ENCODE measurements at regions of chr1 and their contacts with region 1.

Region 1: GRCh38 chr1:234544087-234544579 is 65.2 kb upstream of the TARBP1 start:
- DNase-seq: peak; percentile 98
- H3K4me3 ChIP-seq: no peak overlapping the region
- H3K27ac ChIP-seq: peak overlapping the region; percentile 72
- H3K4me1 ChIP-seq: peaks cover 24% of the 10 kb centered on the region
- H3K27me3 ChIP-seq: no peaks in the 10 kb centered on the region
- CTCF ChIP-seq: no peak
- POLR2A ChIP-seq: no peak

Region 2: DNA sequence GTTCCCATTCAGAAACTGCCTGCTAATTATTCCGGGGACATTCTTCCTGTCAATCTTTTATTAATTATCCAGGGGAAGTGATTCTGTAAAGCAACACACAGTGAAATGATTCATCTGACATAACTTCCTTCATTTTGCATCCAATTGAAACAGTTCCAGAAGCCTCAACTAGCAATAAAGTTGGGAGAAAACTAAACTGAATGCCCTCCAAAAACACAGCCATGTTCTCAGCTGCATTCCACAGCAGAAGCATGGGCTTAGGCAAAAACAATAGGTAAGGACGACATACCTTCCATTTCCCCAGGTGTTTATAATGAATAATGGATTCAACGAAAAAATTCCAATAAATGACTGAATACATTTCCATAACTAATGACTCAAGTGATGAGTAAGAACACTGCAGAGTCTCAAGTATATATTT is 28.3 kb before region 1 on chr1:
- CTCF ChIA-PET with region 1: interaction called, 3 read pairs
- POLR2A ChIA-PET with region 1: no interaction called
- dilution Hi-C with region 1: no loop called
- intact Hi-C with region 1: loop called (anchors 1 kb)
- DNase-seq: peak; percentile 87
- H3K4me3 ChIP-seq: no peak overlapping the region
- H3K27ac ChIP-seq: peak overlapping the region; percentile 58
- H3K4me1 ChIP-seq: peaks cover 15% of the 10 kb centered on the region
- H3K27me3 ChIP-seq: no peaks in the 10 kb centered on the region
- CTCF ChIP-seq: no peak
- POLR2A ChIP-seq: no peak

Region 3: GRCh38 chr1:234531151-234531635 is 12.9 kb before region 1 on chr1:
- CTCF ChIA-PET with region 1: interaction called, 7 read pairs
- POLR2A ChIA-PET with region 1: interaction called, 3 read pairs
- dilution Hi-C with region 1: no loop called
- intact Hi-C with region 1: loop called (anchors 2 kb)
- DNase-seq: no peak
- H3K4me3 ChIP-seq: no peak overlapping the region
- H3K27ac ChIP-seq: no peak overlapping the region
- H3K4me1 ChIP-seq: peaks cover 8% of the 10 kb centered on the region
- H3K27me3 ChIP-seq: no peaks in the 10 kb centered on the region
- CTCF ChIP-seq: no peak
- POLR2A ChIP-seq: no peak

Measured in endothelial cell of umbilical vein (primary cell).